GM18951 (cell line): ENCODE measurements at regions of chr9 and their contacts with region 1.

Region 1: DNA sequence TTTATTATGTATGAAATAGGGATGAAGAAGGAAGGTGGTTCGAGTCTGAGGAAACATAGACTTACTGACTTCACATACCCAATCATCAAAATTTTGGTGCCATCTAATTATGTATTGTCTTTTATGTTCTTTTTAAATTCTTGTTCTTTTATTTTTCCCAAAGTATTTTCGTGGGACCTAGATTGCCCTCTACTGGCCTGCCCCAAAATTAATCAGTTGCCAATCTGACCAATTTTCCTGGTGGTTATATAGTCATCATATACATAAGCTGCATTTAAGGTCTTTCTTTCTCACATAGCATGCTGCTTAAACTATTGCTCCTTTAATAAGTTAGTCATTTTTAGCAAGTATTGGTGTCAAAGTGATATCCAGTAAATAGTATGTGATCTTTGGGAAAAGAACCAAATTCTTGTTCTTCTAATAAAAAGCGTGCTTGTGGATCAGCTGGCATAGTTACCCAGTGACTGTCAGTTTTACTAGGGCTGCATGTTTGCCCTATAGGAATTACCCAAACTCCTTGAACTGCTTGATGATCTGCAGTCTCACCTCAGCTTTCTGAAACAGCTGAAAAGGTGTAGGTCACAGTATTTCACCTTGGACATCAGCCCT is 223.5 kb downstream of the SH3GL2 start:
- POLR2A ChIP-seq: no peak

Region 2: GRCh38 chr9:17653947-17654465 is 148.3 kb before region 1 on chr9:
- in situ Hi-C with region 1: no loop called
- POLR2A ChIP-seq: no peak

Region 3: GRCh38 chr9:17750269-17750668 is 52.1 kb before region 1 on chr9:
- in situ Hi-C with region 1: no loop called
- POLR2A ChIP-seq: no peak

Region 4: DNA sequence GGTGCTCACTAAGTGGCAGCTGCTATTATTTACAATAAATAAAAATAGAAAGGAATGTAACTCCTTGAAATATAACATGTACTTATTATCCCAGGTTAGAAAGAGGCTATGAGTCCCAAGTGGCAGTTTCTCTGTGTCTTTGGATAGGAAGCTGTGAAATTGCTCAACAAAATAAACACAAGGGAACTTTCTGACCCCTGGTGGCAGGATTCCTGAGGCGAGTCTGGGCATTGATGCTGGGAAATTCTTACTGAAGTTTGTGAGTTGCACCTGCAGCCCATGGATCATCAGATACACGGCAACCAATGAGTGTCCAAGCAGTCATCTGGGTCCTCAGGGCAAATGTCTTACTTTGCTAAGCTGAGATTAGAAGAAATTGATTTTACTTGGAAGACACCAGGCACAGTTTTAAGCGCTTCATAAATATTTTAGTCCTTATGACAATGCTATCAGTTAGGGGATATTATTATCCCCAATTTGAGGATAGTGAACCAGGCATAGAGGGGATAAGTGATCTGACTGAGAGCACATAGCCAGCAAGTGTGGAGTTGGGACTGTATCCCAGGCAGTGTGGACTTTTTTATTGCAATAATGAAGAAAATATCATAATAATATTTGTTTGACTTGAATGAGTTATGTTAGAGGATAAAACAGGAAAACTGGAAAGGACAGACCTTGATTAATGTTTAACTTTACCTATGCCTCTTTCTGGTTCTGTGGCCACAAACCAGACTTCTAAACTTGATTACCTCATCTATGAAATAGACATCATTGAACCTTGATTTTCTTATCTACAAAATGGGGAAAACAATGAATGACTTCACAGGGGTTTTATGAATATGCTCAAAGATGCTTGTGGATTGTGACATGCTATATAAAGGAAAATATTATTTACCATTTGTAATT is 406.1 kb after region 1 on chr9:
- in situ Hi-C with region 1: loop called (anchors 10 kb)
- POLR2A ChIP-seq: no peak